ENCODE measurements at regions of chr5 and their contacts with region 1.

Region 1: GRCh38 chr5:154972476-154973080 is 31.7 kb downstream of the MRPL22 start:
- DNase-seq: peak; percentile 23
- H3K4me3 Mint-ChIP-seq: no peak overlapping the region
- H3K27ac Mint-ChIP-seq: no peak overlapping the region
- H3K4me1 Mint-ChIP-seq: peaks cover 6% of the 10 kb centered on the region
- H3K27me3 Mint-ChIP-seq: no peaks in the 10 kb centered on the region

Region 2: GRCh38 chr5:155147222-155147621 is 174.6 kb after region 1 on chr5:
- CTCF ChIA-PET with region 1: interaction called, 3 read pairs
- intact Hi-C with region 1: loop called (anchors 1 kb)
- DNase-seq: no peak
- H3K4me3 Mint-ChIP-seq: no peak overlapping the region
- H3K27ac Mint-ChIP-seq: no peak overlapping the region
- H3K4me1 Mint-ChIP-seq: peaks cover 2% of the 10 kb centered on the region
- H3K27me3 Mint-ChIP-seq: peaks cover 4% of the 10 kb centered on the region

Measured in activated naive CD4-positive, alpha-beta T cell treated with anti-CD3 and anti-CD28 coated beads for 36 hours (primary cell).